HepG2 (cell line): ENCODE measurements at regions of chrX and their contacts with region 1.

Region 1: GRCh38 chrX:8743126-8743732 is 11.3 kb upstream of the ANOS1 start:
- DNase-seq: peak; percentile 17
- ATAC-seq: peak; percentile 50; the same call in 2 of the 3 replicates
- H3K4me3 ChIP-seq: no peak overlapping the region
- H3K27ac ChIP-seq: no peak overlapping the region
- H3K4me1 ChIP-seq: no peaks in the 10 kb centered on the region
- H3K27me3 ChIP-seq: peaks cover 0 to 1% of the 10 kb centered on the region in 2 experiments; a peak in 1 of 5 replicates
- CTCF ChIP-seq: peak; percentile 63
- EP300 ChIP-seq: no peak
- POLR2A ChIP-seq: no peak
- RAD21 ChIP-seq: no peak

Region 2: GRCh38 chrX:7996414-7996813 is 746.8 kb before region 1 on chrX:
- CTCF ChIA-PET with region 1: interaction called, 7 read pairs
- POLR2A ChIA-PET with region 1: no interaction called
- in situ Hi-C with region 1: loop called (anchors 5 kb)
- intact Hi-C with region 1: loop called (anchors 1 kb)
- DNase-seq: peak; percentile 28
- ATAC-seq: 0 out of 3 replicates have a peak, but pooled peaks have one; percentile 31
- H3K4me3 ChIP-seq: no peak overlapping the region
- H3K27ac ChIP-seq: no peak overlapping the region
- H3K4me1 ChIP-seq: no peaks in the 10 kb centered on the region
- H3K27me3 ChIP-seq: no peaks in the 10 kb centered on the region
- CTCF ChIP-seq: peak; percentile 55
- EP300 ChIP-seq: no peak
- POLR2A ChIP-seq: no peak
- RAD21 ChIP-seq: no peak

Region 3: DNA sequence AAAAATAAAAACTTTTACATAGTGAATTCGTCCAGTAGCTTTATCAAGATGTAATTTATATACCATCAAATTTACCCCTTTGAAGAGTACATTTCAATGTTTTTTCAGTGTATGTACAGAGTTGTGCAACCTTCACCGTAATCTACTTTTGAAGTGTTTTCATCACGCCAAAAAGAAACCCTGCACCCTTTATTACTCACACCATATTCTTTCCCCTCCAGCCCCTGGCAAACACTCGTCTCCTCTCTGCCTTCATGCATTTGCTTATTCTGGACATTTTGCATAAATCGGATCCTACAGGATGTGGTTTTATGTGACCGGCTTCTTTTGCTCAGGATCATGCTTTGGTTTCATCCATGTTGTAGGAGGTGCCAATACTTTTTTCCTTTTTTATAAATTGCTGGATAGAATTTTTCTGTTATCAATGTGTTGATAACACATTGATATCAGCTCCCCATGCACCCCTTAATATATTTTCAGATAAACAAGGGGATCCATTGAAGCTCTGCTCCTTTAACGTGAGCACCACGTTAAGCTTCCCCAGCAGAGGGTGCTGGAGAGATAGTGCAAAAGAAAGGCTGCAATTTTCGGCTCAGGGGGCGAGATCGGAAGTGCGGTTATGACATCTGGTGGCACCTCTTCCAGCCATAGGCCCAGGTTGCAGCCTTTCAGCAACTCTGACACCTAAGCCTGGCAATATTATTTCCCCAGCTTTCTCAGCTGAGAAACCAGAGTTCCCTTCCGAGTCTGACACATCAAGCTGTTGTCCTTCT is 378.7 kb before region 1 on chrX:
- CTCF ChIA-PET with region 1: no interaction called
- POLR2A ChIA-PET with region 1: no interaction called
- in situ Hi-C with region 1: no loop called
- intact Hi-C with region 1: loop called (anchors 2 kb)
- DNase-seq: peak; percentile 2
- ATAC-seq: peak; percentile 65
- H3K4me3 ChIP-seq: no peak overlapping the region
- H3K27ac ChIP-seq: no peak overlapping the region
- H3K4me1 ChIP-seq: no peaks in the 10 kb centered on the region
- H3K27me3 ChIP-seq: no peaks in the 10 kb centered on the region
- CTCF ChIP-seq: peak; percentile 56
- EP300 ChIP-seq: no peak
- POLR2A ChIP-seq: no peak
- RAD21 ChIP-seq: no peak

Region 4: GRCh38 chrX:8714164-8714563 is 29.1 kb before region 1 on chrX:
- CTCF ChIA-PET with region 1: no interaction called
- POLR2A ChIA-PET with region 1: no interaction called
- in situ Hi-C with region 1: no loop called
- intact Hi-C with region 1: no loop called
- DNase-seq: no peak
- ATAC-seq: no peak
- H3K4me3 ChIP-seq: no peak overlapping the region
- H3K27ac ChIP-seq: no peak overlapping the region
- H3K4me1 ChIP-seq: no peaks in the 10 kb centered on the region
- H3K27me3 ChIP-seq: no peaks in the 10 kb centered on the region
- CTCF ChIP-seq: no peak
- EP300 ChIP-seq: no peak
- POLR2A ChIP-seq: no peak
- RAD21 ChIP-seq: no peak